Naive thymus-derived CD4-positive, alpha-beta T cell (primary cell): ENCODE measurements at regions of chr13 and their contacts with region 1.

Region 1: DNA sequence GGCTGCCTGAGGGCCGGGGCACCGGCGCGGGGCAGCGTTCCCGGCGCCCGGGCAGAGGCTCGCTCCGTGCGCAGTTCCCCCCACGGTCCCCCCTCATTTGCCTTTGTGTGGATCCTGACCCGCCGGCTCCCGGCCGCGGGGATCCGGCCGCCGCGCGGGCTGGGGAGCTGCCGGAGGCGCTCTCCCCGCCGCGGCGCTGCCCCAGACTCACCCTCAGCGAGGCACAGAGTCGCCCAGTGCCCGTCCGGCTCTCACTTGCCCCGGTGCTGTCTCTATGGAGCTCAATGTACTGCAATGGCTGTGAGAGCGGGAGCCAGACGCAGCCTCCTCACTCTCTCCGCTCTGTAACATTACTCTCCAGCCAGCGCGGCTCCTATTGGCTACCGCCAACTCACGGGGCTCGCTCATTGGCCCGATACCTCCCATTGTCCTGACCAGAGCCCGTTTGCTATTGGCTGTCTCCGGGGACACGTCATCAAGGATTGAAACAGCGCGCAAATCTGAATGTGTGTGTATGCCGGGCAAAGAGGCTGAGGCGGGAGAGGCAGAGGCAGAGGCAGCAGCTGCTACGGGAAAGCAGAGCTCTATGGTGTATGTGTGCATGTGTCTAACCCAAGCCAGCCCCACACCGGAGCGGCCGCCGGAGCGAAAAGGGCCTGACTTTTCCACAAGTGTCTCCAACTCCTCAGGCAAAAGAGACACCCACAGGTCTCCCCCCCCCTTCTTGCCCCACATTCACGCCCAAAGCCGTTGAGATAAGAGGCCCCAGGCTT is at the start of gene HMGB1:
- DNase-seq: peak; percentile 84 to 98 (median 96)
- ATAC-seq: peak; percentile 90
- H3K4me3 ChIP-seq: peak within 1 kb of the TSS; percentile 83
- H3K4me3 Mint-ChIP-seq: peak within 1 kb of the TSS; percentile 86 to 99 (median 94)
- H3K27ac ChIP-seq: peak within 1 kb of the TSS; percentile 97
- H3K27ac Mint-ChIP-seq: peak within 1 kb of the TSS; percentile 93 to 100 (median 98)
- H3K4me1 ChIP-seq: peaks cover 23 to 32% of the 10 kb centered on the region in 2 donors
- H3K4me1 Mint-ChIP-seq: peaks cover 12 to 40% (median 30%) of the 10 kb centered on the region in 7 donors
- H3K27me3 ChIP-seq: no peaks in the 10 kb centered on the region
- H3K27me3 Mint-ChIP-seq: peaks cover 0 to 7% (median 0%) of the 10 kb centered on the region in 5 donors
- total RNA-seq, gene HMGB1: 294 to 530 (median 319) TPM

Region 2: DNA sequence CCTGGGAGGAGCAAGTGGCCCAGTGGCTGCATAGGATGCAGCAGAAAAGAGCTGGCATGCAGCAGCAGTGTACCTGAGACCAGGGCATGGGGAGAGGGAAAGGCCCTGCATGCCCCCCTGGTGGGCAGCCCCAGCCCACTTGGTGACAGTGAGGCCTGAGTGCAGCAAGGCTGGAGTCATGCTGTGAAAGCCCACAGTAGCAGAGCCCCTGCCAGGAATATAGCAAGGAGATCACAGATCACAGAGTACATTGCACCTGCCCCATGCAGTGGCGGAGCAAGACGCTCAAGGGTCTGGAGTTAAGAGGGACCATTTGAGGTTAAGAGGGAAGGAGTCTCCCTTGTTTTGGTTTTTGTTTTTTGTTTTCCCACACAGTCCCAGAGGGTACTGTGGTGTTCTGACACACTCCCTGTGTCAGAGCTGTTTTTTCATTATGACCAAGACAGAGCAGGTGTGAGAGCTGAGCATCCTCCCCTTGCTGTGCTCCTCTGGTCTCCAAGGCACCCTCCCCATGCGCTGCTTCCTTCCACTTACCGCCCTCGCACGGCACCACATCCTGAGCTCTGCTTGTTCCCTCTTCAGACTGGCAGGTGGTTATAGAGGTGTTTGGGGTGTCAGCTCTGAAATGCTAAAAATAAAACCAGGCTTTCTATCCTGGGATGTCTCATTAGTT is 530.3 kb before region 1 on chr13:
- CTCF ChIA-PET with region 1: no interaction called
- POLR2A ChIA-PET with region 1: no interaction called
- intact Hi-C with region 1: loop called in 1 of 2 experiments (anchors 5 kb)
- DNase-seq: peak; percentile 38 to 84 (median 77)
- ATAC-seq: peak; percentile 93
- H3K4me3 ChIP-seq: peak overlapping the region; percentile 61
- H3K4me3 Mint-ChIP-seq: peak overlapping the region; percentile 67 to 95 (median 91)
- H3K27ac ChIP-seq: peak overlapping the region; percentile 71
- H3K27ac Mint-ChIP-seq: peak overlapping the region; percentile 81 to 96 (median 93)
- H3K4me1 ChIP-seq: peaks cover 38 to 43% of the 10 kb centered on the region in 2 donors
- H3K4me1 Mint-ChIP-seq: peaks cover 32 to 53% (median 51%) of the 10 kb centered on the region in 7 donors
- H3K27me3 ChIP-seq: no peaks in the 10 kb centered on the region
- H3K27me3 Mint-ChIP-seq: no peaks in the 10 kb centered on the region

Region 3: GRCh38 chr13:30158774-30159445 is 306.9 kb before region 1 on chr13:
- CTCF ChIA-PET with region 1: no interaction called
- POLR2A ChIA-PET with region 1: no interaction called
- intact Hi-C with region 1: loop called in 1 of 2 experiments (anchors 1 kb)
- DNase-seq: peak in 4 of 9 donors; percentile 30 to 48 (median 42)
- ATAC-seq: peak; percentile 67
- H3K4me3 ChIP-seq: no peak overlapping the region
- H3K4me3 Mint-ChIP-seq: peak overlapping the region in 2 of 10 donors; percentile 23 to 35
- H3K27ac ChIP-seq: no peak overlapping the region
- H3K27ac Mint-ChIP-seq: peak overlapping the region in 6 of 9 donors; percentile 21 to 59 (median 42)
- H3K4me1 ChIP-seq: peaks cover 5 to 35% of the 10 kb centered on the region in 2 donors
- H3K4me1 Mint-ChIP-seq: peaks cover 21 to 44% (median 33%) of the 10 kb centered on the region in 7 donors
- H3K27me3 ChIP-seq: no peaks in the 10 kb centered on the region
- H3K27me3 Mint-ChIP-seq: no peaks in the 10 kb centered on the region

Region 4: DNA sequence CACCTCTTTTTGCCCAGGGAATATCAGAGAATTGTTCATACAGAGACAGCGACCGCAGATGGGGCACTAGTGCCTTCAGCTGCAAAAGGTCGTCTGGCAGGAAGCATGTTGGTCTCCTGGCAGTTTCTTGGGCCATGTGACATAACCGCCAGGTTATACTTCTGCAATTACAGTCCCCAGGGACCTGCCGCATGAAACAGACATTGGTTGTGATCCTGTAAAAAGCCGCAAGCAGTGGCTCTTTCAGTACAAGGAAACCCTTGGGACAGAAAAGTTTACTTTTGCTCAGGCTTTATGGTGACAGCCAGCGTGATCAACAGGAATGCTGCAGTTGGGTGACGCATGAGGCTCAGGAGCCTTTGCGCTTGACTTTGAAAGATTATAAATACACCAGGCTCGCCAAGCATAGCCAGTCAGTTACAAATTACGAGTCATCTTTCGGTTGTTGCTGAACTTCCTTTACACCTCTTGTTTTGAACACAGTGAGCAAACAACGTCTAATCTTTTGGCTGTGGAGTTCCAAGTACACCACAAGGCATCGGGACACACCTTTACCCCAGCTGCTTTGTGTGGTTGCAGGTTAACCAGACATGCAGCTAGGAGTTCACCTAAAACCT is 94.0 kb before region 1 on chr13:
- CTCF ChIA-PET with region 1: interaction called, 38 read pairs
- POLR2A ChIA-PET with region 1: interaction called, 25 read pairs
- intact Hi-C with region 1: loop called (anchors 1 kb)
- DNase-seq: peak; percentile 22 to 92 (median 89)
- ATAC-seq: peak; percentile 78
- H3K4me3 ChIP-seq: peak overlapping the region; percentile 37
- H3K4me3 Mint-ChIP-seq: peak overlapping the region; percentile 51 to 91 (median 76)
- H3K27ac ChIP-seq: peak overlapping the region; percentile 58
- H3K27ac Mint-ChIP-seq: peak overlapping the region; percentile 90 to 98 (median 95)
- H3K4me1 ChIP-seq: peaks cover 73% of the 10 kb centered on the region in 2 donors
- H3K4me1 Mint-ChIP-seq: peaks cover 68 to 87% (median 78%) of the 10 kb centered on the region in 7 donors
- H3K27me3 ChIP-seq: no peaks in the 10 kb centered on the region
- H3K27me3 Mint-ChIP-seq: no peaks in the 10 kb centered on the region

Region 5: DNA sequence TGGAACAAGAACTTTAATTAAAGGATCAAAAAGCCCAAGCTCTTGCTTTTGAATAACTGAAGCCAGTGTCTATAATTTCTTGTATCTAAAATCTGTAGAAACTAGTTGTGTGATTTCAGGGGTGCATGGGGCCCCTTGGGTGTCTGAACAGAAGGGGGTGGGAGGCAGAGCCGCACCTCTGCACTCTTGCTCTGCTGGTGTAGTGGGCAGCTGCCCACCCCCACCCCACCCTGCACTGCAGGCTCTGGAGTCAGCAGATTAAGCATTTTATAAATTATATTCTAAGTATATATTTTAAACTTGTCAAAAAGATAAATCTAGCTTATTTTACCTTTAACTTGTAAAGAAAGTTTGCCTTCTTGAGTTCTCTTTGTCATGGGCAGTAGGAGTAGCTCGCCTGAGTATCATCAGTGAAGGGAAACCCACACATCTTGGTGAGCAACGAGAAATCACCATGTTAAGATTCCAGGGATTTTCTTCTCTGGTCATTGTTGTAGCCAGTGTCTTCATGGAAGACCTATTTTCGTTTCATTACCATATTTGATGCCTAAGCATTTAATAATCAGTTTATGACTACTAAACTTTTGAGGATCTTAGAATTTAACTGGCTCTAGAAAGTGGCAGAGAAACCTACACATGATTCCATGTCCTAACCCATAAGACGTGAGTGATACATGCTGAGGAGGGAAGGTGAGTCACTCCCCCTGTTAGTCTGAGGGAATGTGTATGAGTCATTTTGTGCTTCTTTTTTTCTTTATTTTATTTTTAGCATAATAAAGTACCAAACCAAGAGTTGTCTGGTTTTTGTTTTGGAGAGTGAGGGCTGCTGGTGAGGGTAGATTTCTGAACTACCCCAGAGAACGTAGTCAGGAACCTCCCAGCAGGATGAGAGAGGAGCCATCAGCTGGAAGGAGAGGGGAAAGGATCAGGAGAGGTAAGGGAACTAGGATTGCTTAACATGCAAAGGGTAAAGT is 35.8 kb before region 1 on chr13:
- CTCF ChIA-PET with region 1: no interaction called
- POLR2A ChIA-PET with region 1: no interaction called
- intact Hi-C with region 1: loop called in 1 of 2 experiments (anchors 2 kb)
- DNase-seq: no peak
- ATAC-seq: peak; percentile 81
- H3K4me3 ChIP-seq: no peak overlapping the region
- H3K4me3 Mint-ChIP-seq: peak overlapping the region in 2 of 10 donors; percentile 53 to 64
- H3K27ac ChIP-seq: no peak overlapping the region
- H3K27ac Mint-ChIP-seq: peak overlapping the region in 3 of 9 donors; percentile 20 to 76 (median 74)
- H3K4me1 ChIP-seq: no peaks in the 10 kb centered on the region
- H3K4me1 Mint-ChIP-seq: peaks cover 4 to 32% (median 8%) of the 10 kb centered on the region in 7 donors
- H3K27me3 ChIP-seq: no peaks in the 10 kb centered on the region
- H3K27me3 Mint-ChIP-seq: no peaks in the 10 kb centered on the region

Region 6: DNA sequence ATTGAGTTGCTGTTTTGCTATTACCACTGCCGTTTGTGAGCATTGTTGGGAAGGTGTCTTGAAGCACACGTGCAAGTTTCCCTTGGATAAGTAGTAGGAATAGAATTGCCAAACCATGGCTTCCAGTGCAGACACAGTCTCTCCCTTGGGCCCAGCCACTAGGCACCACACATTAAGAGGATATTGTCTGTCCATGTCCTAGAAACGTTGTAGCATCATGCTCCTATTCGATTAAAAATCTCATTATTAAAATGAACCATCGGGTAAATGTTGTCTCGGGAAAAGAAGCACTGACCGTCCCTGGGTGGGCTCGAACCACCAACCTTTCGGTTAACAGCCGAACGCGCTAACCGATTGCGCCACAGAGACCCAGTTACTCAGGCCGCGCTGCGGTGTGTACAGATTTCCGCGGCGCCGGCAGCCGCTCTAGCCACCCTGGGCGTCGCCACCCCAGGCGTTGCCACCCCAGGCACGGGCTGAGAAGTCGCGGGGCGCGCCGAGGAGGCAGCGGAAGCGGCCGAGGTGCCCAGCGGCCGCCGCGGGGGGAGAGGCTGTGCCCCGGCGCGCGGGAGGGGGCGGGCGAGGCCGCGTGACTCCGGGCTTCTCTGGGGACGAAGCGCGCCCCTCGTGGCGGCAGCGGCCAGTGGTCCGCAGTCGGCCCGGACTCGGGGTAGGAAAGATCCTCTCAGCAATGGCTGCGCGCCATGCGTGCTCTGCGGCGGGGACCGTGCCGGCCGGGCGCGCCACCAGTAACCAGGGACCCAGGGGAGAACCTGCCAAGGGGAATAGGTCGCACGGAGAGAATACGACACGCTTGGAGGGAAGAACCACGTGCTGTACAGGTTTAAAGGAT is 208.1 kb after region 1 on chr13:
- CTCF ChIA-PET with region 1: no interaction called
- POLR2A ChIA-PET with region 1: no interaction called
- intact Hi-C with region 1: loop called (anchors 1 to 10 kb)
- DNase-seq: peak; percentile 79 to 94 (median 86)
- ATAC-seq: peak; percentile 97
- H3K4me3 ChIP-seq: peak overlapping the region; percentile 67
- H3K4me3 Mint-ChIP-seq: peak overlapping the region; percentile 72 to 90 (median 88)
- H3K27ac ChIP-seq: peak overlapping the region; percentile 38
- H3K27ac Mint-ChIP-seq: peak overlapping the region; percentile 81 to 98 (median 91)
- H3K4me1 ChIP-seq: peaks cover 0 to 5% of the 10 kb centered on the region in 2 donors
- H3K4me1 Mint-ChIP-seq: peaks cover 2 to 32% (median 15%) of the 10 kb centered on the region in 7 donors
- H3K27me3 ChIP-seq: no peaks in the 10 kb centered on the region
- H3K27me3 Mint-ChIP-seq: peaks cover 0 to 36% (median 0%) of the 10 kb centered on the region in 5 donors